ENCODE measurements at regions of chr11 and their contacts with region 1.

Region 1: DNA sequence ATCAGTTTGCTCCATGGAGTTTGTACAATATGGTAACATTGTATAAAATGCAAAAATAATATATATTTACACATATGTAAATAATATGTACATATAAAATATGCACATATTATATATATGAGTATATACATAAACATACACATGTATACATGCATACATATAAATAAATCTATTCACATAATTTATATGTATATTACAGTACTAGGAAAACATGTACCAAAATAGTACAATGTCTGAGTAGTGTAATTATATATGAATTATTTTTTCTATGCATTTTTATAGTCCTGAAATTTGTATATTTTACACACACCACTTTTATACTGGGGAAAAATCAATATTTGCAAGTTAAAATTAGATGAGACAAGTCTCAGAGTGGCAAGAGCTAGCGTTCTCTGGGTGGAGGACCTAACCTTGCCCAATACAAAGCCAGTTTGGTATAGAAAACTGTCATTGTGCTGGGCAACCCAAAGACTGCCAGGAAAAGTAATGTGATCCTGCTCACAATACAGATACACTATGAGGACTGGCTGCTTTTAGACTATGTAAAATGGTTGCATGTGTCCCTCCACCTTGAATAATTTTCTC is 889.4 kb downstream of the LRRC4C start:
- DNase-seq: no peak
- ATAC-seq: no peak
- H3K4me3 ChIP-seq: no peak overlapping the region
- H3K4me3 Mint-ChIP-seq: no peak overlapping the region
- H3K27ac ChIP-seq: no peak overlapping the region
- H3K27ac Mint-ChIP-seq: no peak overlapping the region
- H3K4me1 ChIP-seq: no peaks in the 10 kb centered on the region
- H3K4me1 Mint-ChIP-seq: no peaks in the 10 kb centered on the region
- H3K27me3 ChIP-seq: no peaks in the 10 kb centered on the region
- H3K27me3 Mint-ChIP-seq: no peaks in the 10 kb centered on the region
- CTCF ChIP-seq: no peak

Region 2: DNA sequence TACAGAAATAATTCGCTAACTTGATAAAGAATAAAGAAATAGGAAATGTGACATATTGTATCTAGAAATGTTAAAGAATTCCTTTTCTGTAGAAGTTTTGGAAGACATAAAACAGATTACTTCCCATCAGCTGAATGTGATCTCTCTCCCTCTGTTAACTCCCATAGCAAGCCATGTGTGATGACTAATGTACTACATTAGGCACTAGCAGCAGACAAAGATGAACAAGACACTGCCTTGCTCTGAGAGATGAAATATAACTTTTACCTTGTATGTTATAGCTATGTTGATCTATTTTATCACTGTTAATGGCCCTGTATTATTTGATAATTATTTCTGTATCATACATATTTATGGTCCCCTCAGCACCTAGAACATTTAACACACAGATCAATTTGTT is 72.2 kb after region 1 on chr11:
- CTCF ChIA-PET with region 1: no interaction called
- POLR2A ChIA-PET with region 1: no interaction called
- intact Hi-C with region 1: loop called in 1 of 2 experiments (anchors 10 kb)
- DNase-seq: no peak
- ATAC-seq: no peak
- H3K4me3 ChIP-seq: no peak overlapping the region
- H3K4me3 Mint-ChIP-seq: no peak overlapping the region
- H3K27ac ChIP-seq: no peak overlapping the region
- H3K27ac Mint-ChIP-seq: no peak overlapping the region
- H3K4me1 ChIP-seq: no peaks in the 10 kb centered on the region
- H3K4me1 Mint-ChIP-seq: no peaks in the 10 kb centered on the region
- H3K27me3 ChIP-seq: no peaks in the 10 kb centered on the region
- H3K27me3 Mint-ChIP-seq: no peaks in the 10 kb centered on the region
- CTCF ChIP-seq: no peak

Measured in CD8-positive, alpha-beta T cell (primary cell).